ENCODE measurements at regions of chr10 and their contacts with region 1.

Region 1: DNA sequence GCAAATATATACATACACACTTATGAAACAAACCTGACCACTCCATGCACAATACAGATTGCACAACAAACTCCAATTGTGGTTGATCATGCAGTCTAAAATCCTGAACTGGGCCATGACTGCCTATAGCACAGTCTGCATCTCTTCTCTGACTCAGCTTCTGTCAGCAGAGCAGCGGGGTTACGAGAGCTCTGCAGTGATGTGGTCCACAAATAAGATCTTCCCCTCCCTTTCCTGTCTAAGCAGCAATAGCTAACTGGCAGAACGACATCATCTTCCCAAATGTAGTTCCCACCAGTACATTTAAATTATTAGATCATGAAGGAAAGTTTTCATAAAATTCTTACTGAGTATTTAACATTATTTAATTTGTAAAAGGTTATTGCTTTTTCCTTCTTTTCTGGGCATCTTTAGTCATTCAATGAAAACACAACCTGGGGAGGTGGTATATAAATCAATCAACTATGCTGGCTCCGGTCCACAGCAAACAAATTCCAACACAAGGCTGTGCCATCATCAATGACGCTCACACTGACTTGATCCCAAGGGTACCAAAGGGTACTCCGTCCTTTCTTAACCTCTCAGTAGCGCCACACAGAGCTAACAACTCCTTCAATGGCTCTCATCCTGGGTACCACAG is 17.1 kb downstream of the ARHGAP21 start:
- DNase-seq: peak; percentile 72
- H3K4me3 ChIP-seq: no peak overlapping the region
- H3K27ac ChIP-seq: no peak overlapping the region
- H3K4me1 ChIP-seq: peaks cover 23% of the 10 kb centered on the region
- H3K27me3 ChIP-seq: no peaks in the 10 kb centered on the region
- CTCF ChIP-seq: no peak

Region 2: GRCh38 chr10:24415455-24416125 is 291.0 kb before region 1 on chr10:
- CTCF ChIA-PET with region 1: no interaction called
- POLR2A ChIA-PET with region 1: no interaction called
- intact Hi-C with region 1: no loop called
- DNase-seq: peak; percentile 95
- H3K4me3 ChIP-seq: no peak overlapping the region
- H3K27ac ChIP-seq: peak overlapping the region; percentile 70
- H3K4me1 ChIP-seq: peaks cover 38% of the 10 kb centered on the region
- H3K27me3 ChIP-seq: no peaks in the 10 kb centered on the region
- CTCF ChIP-seq: no peak

Region 3: DNA sequence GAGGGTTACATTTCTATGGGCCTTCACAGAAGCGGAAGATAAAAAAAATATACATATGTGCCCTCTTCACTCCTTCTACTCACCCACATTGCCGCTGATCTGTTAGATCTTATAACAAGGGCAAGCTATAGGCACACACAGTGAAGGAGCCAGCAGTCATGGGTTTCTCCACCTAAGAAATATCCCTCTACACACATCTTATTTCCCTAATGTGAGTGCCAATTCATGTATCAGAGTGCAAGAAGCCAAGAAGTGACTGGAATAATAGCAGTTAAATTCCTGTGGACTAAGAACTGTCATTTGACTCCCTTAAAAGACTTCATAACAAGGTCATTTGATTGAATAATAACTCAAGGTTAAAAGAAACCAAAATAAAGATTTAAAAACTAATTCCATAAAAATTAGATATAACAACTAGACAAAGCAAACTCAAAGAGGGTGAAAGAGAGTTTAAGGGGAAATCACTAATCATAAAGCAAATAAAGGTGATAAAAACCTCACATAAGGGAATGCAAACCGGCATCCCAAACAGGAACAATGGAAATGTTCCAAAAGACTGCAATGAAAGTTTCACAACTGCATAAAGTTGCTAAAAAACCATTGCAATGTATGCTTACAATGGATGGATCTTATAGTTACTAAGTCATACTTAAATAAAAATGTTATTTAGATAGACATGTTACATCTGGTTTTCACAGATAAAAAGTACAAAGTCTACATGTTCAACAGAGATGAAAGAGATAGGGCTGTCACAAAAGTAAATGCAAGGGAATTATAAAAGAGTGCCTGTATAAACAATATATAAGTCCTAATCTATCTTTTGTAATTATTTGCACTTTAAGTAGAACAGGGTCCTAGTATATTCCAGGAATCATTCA is 25.7 kb before region 1 on chr10:
- CTCF ChIA-PET with region 1: no interaction called
- POLR2A ChIA-PET with region 1: interaction called, 12 read pairs
- intact Hi-C with region 1: no loop called
- DNase-seq: no peak
- H3K4me3 ChIP-seq: no peak overlapping the region
- H3K27ac ChIP-seq: peak overlapping the region; percentile 17
- H3K4me1 ChIP-seq: peaks cover 20% of the 10 kb centered on the region
- H3K27me3 ChIP-seq: no peaks in the 10 kb centered on the region
- CTCF ChIP-seq: no peak

Measured in A673 (cell line).